ENCODE measurements at regions of chr17 and their contacts with region 1.

Region 1: GRCh38 chr17:67376737-67377487 is at the start of gene PITPNC1:
- DNase-seq: peak; percentile 84 to 86
- ATAC-seq: peak; percentile 72 to 83
- H3K4me3 ChIP-seq: peak within 1 kb of the TSS; percentile 65
- H3K27ac ChIP-seq: peak within 1 kb of the TSS; percentile 77 to 86
- H3K4me1 ChIP-seq: peaks cover 14% of the 10 kb centered on the region; the same call in 2 of the 3 replicates
- CTCF ChIP-seq: 0 out of 3 replicates have a peak, but pooled peaks have one; percentile 14
- EP300 ChIP-seq: no peak
- POLR2A ChIP-seq: peak; percentile 57
- RAD21 ChIP-seq: no peak
- polyA plus RNA-seq, gene PITPNC1: 10.8 and 11.2 TPM in 2 replicates

Region 2: GRCh38 chr17:67366193-67367157 is 10.4 kb before region 1 on chr17 and contains the start of gene PSMD12:
- CTCF ChIA-PET with region 1: interaction called, 132 read pairs
- POLR2A ChIA-PET with region 1: interaction called, 3 read pairs
- DNase-seq: peak; percentile 94 to 95
- ATAC-seq: peak; percentile 96 to 97
- H3K4me3 ChIP-seq: peak within 1 kb of the TSS; percentile 81
- H3K27ac ChIP-seq: peak within 1 kb of the TSS; percentile 92 to 94
- H3K4me1 ChIP-seq: peaks cover 24% of the 10 kb centered on the region
- CTCF ChIP-seq: no peak
- EP300 ChIP-seq: no peak
- POLR2A ChIP-seq: peak; percentile 94
- RAD21 ChIP-seq: no peak
- polyA plus RNA-seq, gene PSMD12: 63.4 and 106 TPM in 2 replicates

Region 3: DNA sequence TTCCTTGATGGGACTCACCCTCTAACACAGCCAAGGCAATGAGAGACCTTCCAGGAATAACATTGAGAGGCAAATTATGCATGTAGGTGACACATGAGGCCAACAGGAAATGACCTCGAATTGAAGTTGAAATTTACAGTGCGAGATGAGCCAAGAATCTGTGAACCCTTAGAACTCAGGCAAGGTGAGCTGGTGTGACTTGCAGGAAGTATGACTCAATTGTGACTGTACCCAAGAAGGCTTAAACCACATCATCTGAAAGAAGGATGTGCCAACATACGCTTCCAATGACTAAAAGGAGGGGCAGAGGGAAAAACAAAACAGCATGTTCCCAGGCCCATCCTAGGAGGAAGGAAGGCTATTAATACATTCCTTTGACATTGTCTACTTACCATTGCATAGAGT is 45.0 kb after region 1 on chr17:
- CTCF ChIA-PET with region 1: interaction called, 16 read pairs
- POLR2A ChIA-PET with region 1: no interaction called
- DNase-seq: peak; percentile 95
- ATAC-seq: peak; percentile 86 to 99
- H3K4me3 ChIP-seq: no peak overlapping the region
- H3K27ac ChIP-seq: peak overlapping the region; percentile 68 to 77
- H3K4me1 ChIP-seq: peaks cover 27% of the 10 kb centered on the region
- CTCF ChIP-seq: no peak
- EP300 ChIP-seq: peak; percentile 34 to 58; a peak in 3 of 5 replicates
- POLR2A ChIP-seq: no peak
- RAD21 ChIP-seq: no peak

Region 4: GRCh38 chr17:67469208-67469895 is 92.4 kb after region 1 on chr17:
- CTCF ChIA-PET with region 1: interaction called, 323 read pairs
- POLR2A ChIA-PET with region 1: no interaction called
- DNase-seq: no peak
- ATAC-seq: peak in 1 of 2 experiments; percentile 23; a peak in 3 of 6 replicates
- H3K4me3 ChIP-seq: no peak overlapping the region
- H3K27ac ChIP-seq: no peak overlapping the region
- H3K4me1 ChIP-seq: no peaks in the 10 kb centered on the region
- CTCF ChIP-seq: no peak
- EP300 ChIP-seq: no peak
- POLR2A ChIP-seq: no peak
- RAD21 ChIP-seq: no peak

Region 5: GRCh38 chr17:67491009-67491680 is 114.2 kb after region 1 on chr17:
- CTCF ChIA-PET with region 1: interaction called, 19 read pairs
- POLR2A ChIA-PET with region 1: no interaction called
- DNase-seq: peak; percentile 80 to 91
- ATAC-seq: peak; percentile 97 to 98
- H3K4me3 ChIP-seq: peak overlapping the region; percentile 29
- H3K27ac ChIP-seq: peak overlapping the region; percentile 61 to 67
- H3K4me1 ChIP-seq: peaks cover 26% of the 10 kb centered on the region
- CTCF ChIP-seq: no peak
- EP300 ChIP-seq: peak; percentile 36 to 57; a peak in 3 of 5 replicates
- POLR2A ChIP-seq: no peak
- RAD21 ChIP-seq: 0 out of 5 replicates have a peak, but pooled peaks of 1 of the 2 experiments have one; percentile 34

Region 6: DNA sequence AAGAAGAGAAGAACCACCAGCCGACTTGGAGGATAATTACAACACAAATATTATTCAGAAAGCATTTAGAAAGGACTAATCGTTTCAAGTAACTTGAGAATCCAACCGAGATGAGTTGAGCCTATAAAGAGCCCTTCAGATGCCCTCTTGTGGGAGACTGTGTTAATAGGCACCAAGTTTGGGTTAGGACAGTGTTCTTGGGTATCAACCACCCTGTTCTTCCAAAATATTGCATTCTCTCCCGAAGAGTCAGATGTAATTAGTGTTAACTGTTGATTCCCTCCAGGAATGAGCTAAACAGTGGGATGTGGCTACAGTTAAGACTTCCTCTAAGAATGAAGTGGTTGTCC is 253.0 kb after region 1 on chr17:
- CTCF ChIA-PET with region 1: interaction called, 56 read pairs
- POLR2A ChIA-PET with region 1: no interaction called
- DNase-seq: peak in 1 of 2 experiments; percentile 56
- ATAC-seq: peak; percentile 75 to 79; a peak in 5 of 6 replicates
- H3K4me3 ChIP-seq: no peak overlapping the region
- H3K27ac ChIP-seq: no peak overlapping the region
- H3K4me1 ChIP-seq: no peaks in the 10 kb centered on the region
- CTCF ChIP-seq: peak; percentile 47
- EP300 ChIP-seq: no peak
- POLR2A ChIP-seq: no peak
- RAD21 ChIP-seq: peak; percentile 52; a peak in 4 of 5 replicates

Region 7: GRCh38 chr17:67696853-67697505 is 320.1 kb after region 1 on chr17:
- CTCF ChIA-PET with region 1: interaction called, 33 read pairs
- POLR2A ChIA-PET with region 1: no interaction called
- DNase-seq: no peak
- ATAC-seq: no peak
- H3K4me3 ChIP-seq: no peak overlapping the region
- H3K27ac ChIP-seq: no peak overlapping the region
- H3K4me1 ChIP-seq: no peaks in the 10 kb centered on the region
- CTCF ChIP-seq: no peak
- EP300 ChIP-seq: no peak
- POLR2A ChIP-seq: no peak
- RAD21 ChIP-seq: no peak

Measured in A549 (cell line).